PC-3 (cell line): ENCODE measurements at regions of chr5 and their contacts with region 1.

Region 1: DNA sequence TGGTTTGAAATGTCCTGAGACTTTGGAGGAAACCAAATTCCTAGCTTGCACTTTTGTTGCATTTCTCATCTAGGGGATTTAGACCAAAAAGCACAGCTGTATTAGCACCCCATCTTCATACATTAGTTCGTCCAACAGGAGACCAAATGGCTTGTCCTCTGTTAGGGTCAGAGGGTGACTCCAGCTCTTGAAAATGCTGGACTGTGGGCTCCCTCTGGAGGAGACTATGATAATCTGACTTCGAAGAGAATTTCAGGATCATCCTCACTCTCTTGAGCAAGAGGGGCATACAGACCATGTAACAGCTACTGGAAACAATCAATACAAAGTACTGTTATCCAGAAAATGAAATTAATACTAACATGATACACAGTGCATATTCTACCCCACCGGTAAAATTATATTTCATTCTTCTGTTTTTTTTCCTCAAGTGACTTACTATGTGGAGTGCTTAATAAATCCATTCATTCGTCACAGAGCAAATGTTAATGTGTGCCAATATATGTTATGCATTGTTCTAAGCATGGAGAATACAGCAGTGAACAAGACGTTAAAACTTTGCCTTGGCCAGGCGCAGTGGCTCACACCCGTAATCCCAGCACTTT is 63.7 kb upstream of the PPP2CA start:
- DNase-seq: peak; percentile 75
- ATAC-seq: peak; percentile 89
- H3K4me3 ChIP-seq: no peak overlapping the region
- H3K27ac ChIP-seq: no peak overlapping the region
- H3K4me1 ChIP-seq: no peaks in the 10 kb centered on the region
- H3K27me3 ChIP-seq: no peaks in the 10 kb centered on the region
- CTCF ChIP-seq: peak; percentile 79

Region 2: GRCh38 chr5:134184155-134185135 is 105.2 kb before region 1 on chr5:
- CTCF ChIA-PET with region 1: interaction called, 9 read pairs
- POLR2A ChIA-PET with region 1: no interaction called
- intact Hi-C with region 1: loop called (anchors 1 kb)
- DNase-seq: peak; percentile 74
- ATAC-seq: peak; percentile 96
- H3K4me3 ChIP-seq: no peak overlapping the region
- H3K27ac ChIP-seq: no peak overlapping the region
- H3K4me1 ChIP-seq: no peaks in the 10 kb centered on the region
- H3K27me3 ChIP-seq: no peaks in the 10 kb centered on the region
- CTCF ChIP-seq: peak; percentile 78

Region 3: GRCh38 chr5:134245101-134245604 is 44.5 kb before region 1 on chr5:
- CTCF ChIA-PET with region 1: no interaction called
- POLR2A ChIA-PET with region 1: no interaction called
- intact Hi-C with region 1: loop called (anchors 1 kb)
- DNase-seq: peak; percentile 93
- ATAC-seq: peak; percentile 82
- H3K4me3 ChIP-seq: peak overlapping the region; percentile 65
- H3K27ac ChIP-seq: peak overlapping the region; percentile 86
- H3K4me1 ChIP-seq: peaks cover 47% of the 10 kb centered on the region
- H3K27me3 ChIP-seq: no peaks in the 10 kb centered on the region
- CTCF ChIP-seq: no peak